ENCODE measurements at regions of chr10 and their contacts with region 1.

Region 1: GRCh38 chr10:7687228-7687907 is 15.7 kb upstream of the ITIH2 start:
- DNase-seq: peak; percentile 93 to 94
- H3K4me3 ChIP-seq: no peak overlapping the region
- H3K4me3 Mint-ChIP-seq: peak overlapping the region; percentile 66
- H3K27ac Mint-ChIP-seq: peak overlapping the region; percentile 75
- H3K4me1 ChIP-seq: peaks cover 6% of the 10 kb centered on the region
- H3K4me1 Mint-ChIP-seq: peaks cover 16% of the 10 kb centered on the region
- H3K27me3 ChIP-seq: no peaks in the 10 kb centered on the region
- H3K27me3 Mint-ChIP-seq: no peaks in the 10 kb centered on the region
- CTCF ChIP-seq: peak; percentile 96 to 98

Region 2: GRCh38 chr10:7488418-7488829 is 198.9 kb before region 1 on chr10:
- CTCF ChIA-PET with region 1: no interaction called
- POLR2A ChIA-PET with region 1: no interaction called
- intact Hi-C with region 1: no loop called
- DNase-seq: no peak
- H3K4me3 ChIP-seq: no peak overlapping the region
- H3K4me3 Mint-ChIP-seq: no peak overlapping the region
- H3K27ac Mint-ChIP-seq: no peak overlapping the region
- H3K4me1 ChIP-seq: no peaks in the 10 kb centered on the region
- H3K4me1 Mint-ChIP-seq: no peaks in the 10 kb centered on the region
- H3K27me3 ChIP-seq: peaks cover 2% of the 10 kb centered on the region; the same call in 1 of the 2 replicates
- H3K27me3 Mint-ChIP-seq: peaks cover 24% of the 10 kb centered on the region
- CTCF ChIP-seq: no peak

Region 3: GRCh38 chr10:7541137-7542095 is 146.0 kb before region 1 on chr10:
- CTCF ChIA-PET with region 1: interaction called, 10 read pairs
- POLR2A ChIA-PET with region 1: no interaction called
- intact Hi-C with region 1: loop called (anchors 1 kb)
- DNase-seq: peak; percentile 92 to 95
- H3K4me3 ChIP-seq: no peak overlapping the region
- H3K4me3 Mint-ChIP-seq: peak overlapping the region; percentile 56
- H3K27ac Mint-ChIP-seq: peak overlapping the region; percentile 98
- H3K4me1 ChIP-seq: peaks cover 41% of the 10 kb centered on the region
- H3K4me1 Mint-ChIP-seq: peaks cover 30% of the 10 kb centered on the region
- H3K27me3 ChIP-seq: no peaks in the 10 kb centered on the region
- H3K27me3 Mint-ChIP-seq: no peaks in the 10 kb centered on the region
- CTCF ChIP-seq: peak; percentile 41 to 59

Region 4: GRCh38 chr10:7622969-7623368 is 64.4 kb before region 1 on chr10:
- CTCF ChIA-PET with region 1: interaction called, 3 read pairs
- POLR2A ChIA-PET with region 1: no interaction called
- intact Hi-C with region 1: loop called (anchors 1 kb)
- DNase-seq: peak in 1 of 2 experiments; percentile 42
- H3K4me3 ChIP-seq: no peak overlapping the region
- H3K4me3 Mint-ChIP-seq: no peak overlapping the region
- H3K27ac Mint-ChIP-seq: no peak overlapping the region
- H3K4me1 ChIP-seq: no peaks in the 10 kb centered on the region
- H3K4me1 Mint-ChIP-seq: no peaks in the 10 kb centered on the region
- H3K27me3 ChIP-seq: no peaks in the 10 kb centered on the region
- H3K27me3 Mint-ChIP-seq: peaks cover 3% of the 10 kb centered on the region
- CTCF ChIP-seq: peak in 1 of 2 experiments; percentile 46

Region 5: DNA sequence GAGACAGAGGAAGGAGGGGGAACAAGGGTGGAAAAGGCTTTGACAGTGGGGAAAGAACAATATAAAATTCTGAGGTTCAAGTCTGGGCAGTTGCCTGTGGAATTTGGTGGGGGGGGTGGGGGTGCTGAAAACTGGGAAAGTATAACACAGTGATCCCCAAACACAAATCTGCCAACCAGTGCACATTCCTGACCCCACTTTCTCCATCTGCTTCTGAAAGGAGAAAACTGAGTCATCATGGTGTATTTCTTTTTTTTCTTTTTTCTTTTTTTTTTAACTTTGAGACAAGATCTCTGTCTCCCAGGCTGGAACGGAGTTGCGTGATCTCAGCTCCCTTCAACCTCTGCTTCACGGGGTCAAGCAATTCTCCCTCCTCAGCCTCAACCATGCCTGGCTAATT is 16.2 kb before region 1 on chr10:
- CTCF ChIA-PET with region 1: interaction called, 14 read pairs
- POLR2A ChIA-PET with region 1: no interaction called
- intact Hi-C with region 1: no loop called
- DNase-seq: no peak
- H3K4me3 ChIP-seq: no peak overlapping the region
- H3K4me3 Mint-ChIP-seq: no peak overlapping the region
- H3K27ac Mint-ChIP-seq: no peak overlapping the region
- H3K4me1 ChIP-seq: 0 out of 2 replicates have a peak, but pooled peaks cover 3% of the 10 kb centered on the region
- H3K4me1 Mint-ChIP-seq: peaks cover 13% of the 10 kb centered on the region
- H3K27me3 ChIP-seq: no peaks in the 10 kb centered on the region
- H3K27me3 Mint-ChIP-seq: peaks cover 6% of the 10 kb centered on the region
- CTCF ChIP-seq: no peak

Region 6: GRCh38 chr10:7722927-7723529 is 35.7 kb after region 1 on chr10:
- CTCF ChIA-PET with region 1: no interaction called
- POLR2A ChIA-PET with region 1: no interaction called
- intact Hi-C with region 1: no loop called
- DNase-seq: no peak
- H3K4me3 ChIP-seq: no peak overlapping the region
- H3K4me3 Mint-ChIP-seq: no peak overlapping the region
- H3K27ac Mint-ChIP-seq: no peak overlapping the region
- H3K4me1 ChIP-seq: no peaks in the 10 kb centered on the region
- H3K4me1 Mint-ChIP-seq: no peaks in the 10 kb centered on the region
- H3K27me3 ChIP-seq: no peaks in the 10 kb centered on the region; the same call in 1 of the 2 replicates
- H3K27me3 Mint-ChIP-seq: peaks cover 11% of the 10 kb centered on the region
- CTCF ChIP-seq: no peak

Region 7: DNA sequence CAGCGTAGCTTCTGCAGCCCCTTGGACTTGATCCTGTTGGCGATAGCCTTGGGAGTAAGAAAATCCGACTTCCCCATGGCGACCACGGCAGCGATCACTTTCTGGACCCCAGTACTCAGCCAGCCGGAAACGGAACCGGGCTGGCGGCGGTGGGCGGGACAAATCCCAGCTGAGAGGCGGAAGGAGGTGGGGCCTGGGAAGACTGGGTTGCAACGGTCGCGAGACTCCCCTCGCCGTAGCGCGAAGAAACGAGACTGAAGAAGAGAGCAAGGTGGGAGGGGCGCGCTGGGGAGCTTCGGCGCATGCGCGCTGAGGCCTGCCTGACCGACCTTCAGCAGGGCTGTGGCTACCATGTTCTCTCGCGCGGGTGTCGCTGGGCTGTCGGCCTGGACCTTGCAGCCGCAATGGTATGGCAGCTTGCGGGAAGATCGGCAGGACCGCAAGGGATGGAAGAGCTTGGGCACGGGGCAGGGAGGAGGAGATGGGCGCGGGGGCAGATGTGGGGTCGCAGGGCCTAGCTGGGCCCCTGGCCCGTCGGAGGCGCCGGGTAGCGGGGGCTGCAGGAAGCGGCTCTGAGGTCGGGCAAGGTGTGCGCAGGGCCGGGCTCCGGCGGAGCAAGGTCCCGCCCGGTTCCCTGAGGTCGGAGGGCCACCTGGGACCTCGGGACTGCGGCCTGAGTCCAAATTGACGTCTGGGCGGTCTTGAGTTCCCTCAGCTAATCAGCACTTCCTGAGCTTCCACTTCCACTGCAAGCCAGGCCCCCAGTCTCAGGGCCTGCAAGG is 100.7 kb after region 1 on chr10 and contains the starts of genes ATP5F1C and KIN:
- CTCF ChIA-PET with region 1: interaction called, 14 read pairs
- POLR2A ChIA-PET with region 1: no interaction called
- intact Hi-C with region 1: no loop called
- DNase-seq: peak; percentile 99
- H3K4me3 ChIP-seq: peak within 1 kb of the TSS; percentile 100
- H3K4me3 Mint-ChIP-seq: no peak within 1 kb of the TSS
- H3K27ac Mint-ChIP-seq: no peak within 1 kb of the TSS
- H3K4me1 ChIP-seq: peaks cover 8% of the 10 kb centered on the region; the same call in 1 of the 2 replicates
- H3K4me1 Mint-ChIP-seq: peaks cover 26% of the 10 kb centered on the region
- H3K27me3 ChIP-seq: no peaks in the 10 kb centered on the region
- H3K27me3 Mint-ChIP-seq: no peaks in the 10 kb centered on the region
- CTCF ChIP-seq: no peak
- total RNA-seq, gene ATP5F1C: 568 and 613 TPM in 2 replicates
- total RNA-seq, gene KIN: 27.8 and 27.9 TPM in 2 replicates

Region 8: DNA sequence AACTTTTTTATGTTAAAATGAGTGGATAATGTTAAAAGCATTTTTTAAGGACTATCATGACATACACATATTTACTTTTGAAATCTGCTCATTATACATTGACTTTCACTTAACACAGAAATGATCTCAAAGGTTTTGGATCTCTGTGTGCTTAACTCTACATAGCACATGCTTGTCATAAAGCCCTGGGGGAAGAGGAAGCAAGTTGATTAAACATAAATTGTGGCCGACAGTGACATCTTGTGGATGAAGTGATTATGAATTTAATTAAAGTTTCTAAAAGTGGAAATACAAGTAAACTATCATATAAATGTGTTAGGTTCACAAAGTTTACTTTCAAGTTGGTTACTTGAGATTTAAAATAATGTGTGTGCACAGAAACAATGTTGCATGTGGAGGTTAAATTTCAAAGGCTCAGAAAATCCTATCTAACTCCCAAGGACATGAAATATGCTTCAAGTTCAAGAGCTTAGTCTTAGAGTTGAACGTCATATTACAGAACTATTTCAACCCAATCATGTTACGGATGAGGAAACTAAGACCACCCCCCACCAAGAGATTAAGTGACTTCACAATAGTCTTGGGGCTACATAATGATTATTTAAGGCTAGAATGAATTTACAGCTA is 1614.9 kb after region 1 on chr10:
- CTCF ChIA-PET with region 1: no interaction called
- POLR2A ChIA-PET with region 1: no interaction called
- intact Hi-C with region 1: loop called (anchors 1 kb)
- DNase-seq: peak in 1 of 2 experiments; percentile 53
- H3K4me3 ChIP-seq: no peak overlapping the region
- H3K4me3 Mint-ChIP-seq: no peak overlapping the region
- H3K27ac Mint-ChIP-seq: no peak overlapping the region
- H3K4me1 ChIP-seq: no peaks in the 10 kb centered on the region
- H3K4me1 Mint-ChIP-seq: no peaks in the 10 kb centered on the region
- H3K27me3 ChIP-seq: no peaks in the 10 kb centered on the region
- H3K27me3 Mint-ChIP-seq: peaks cover 7% of the 10 kb centered on the region
- CTCF ChIP-seq: peak; percentile 40 to 48